GM12878 (cell line): ENCODE measurements at regions of chr9 and their contacts with region 1.

Region 1: DNA sequence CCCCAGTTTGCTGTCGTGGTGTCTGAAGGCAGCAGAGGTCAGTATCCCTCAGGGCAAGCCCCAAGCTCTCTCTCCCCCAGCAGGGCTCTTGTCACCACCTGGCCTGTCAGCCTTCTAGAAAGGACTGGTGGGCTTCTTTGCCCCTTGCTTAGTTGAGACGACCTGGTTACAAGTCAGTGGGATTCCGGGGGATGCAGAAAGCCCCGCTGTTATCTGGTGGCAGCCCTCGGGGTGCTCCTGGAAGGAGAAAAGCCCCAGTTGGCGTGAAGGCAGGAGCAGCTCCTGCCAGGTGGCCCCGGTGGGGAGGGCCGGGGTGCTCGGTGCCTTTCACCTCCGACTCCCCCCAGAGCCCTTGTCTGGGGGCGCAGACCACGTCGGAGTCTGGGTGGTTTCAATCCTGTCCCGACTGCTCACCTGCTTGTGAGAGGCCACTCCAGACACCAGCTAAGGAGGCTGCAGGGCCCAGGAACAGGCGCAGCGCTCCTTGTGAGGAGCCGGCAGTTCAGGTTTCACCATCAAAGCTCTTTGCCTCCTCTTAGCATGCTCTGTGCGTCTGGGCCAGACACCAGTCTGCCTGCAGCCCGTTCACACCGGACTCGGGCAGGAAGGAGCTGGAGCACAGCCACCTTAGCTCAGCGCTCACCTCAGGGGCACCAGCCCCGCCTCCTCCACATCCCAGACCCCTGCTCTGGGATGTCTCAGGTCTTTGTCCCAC is 106.5 kb upstream of the LMX1B start:
- DNase-seq: no peak
- ATAC-seq: no peak
- H3K4me3 ChIP-seq: no peak overlapping the region
- H3K27ac ChIP-seq: no peak overlapping the region
- H3K4me1 ChIP-seq: no peaks in the 10 kb centered on the region
- H3K27me3 ChIP-seq: peaks cover 0 to 1% of the 10 kb centered on the region in 2 experiments; a peak in 2 of 4 replicates
- CTCF ChIP-seq: no peak
- EP300 ChIP-seq: no peak
- POLR2A ChIP-seq: no peak
- RAD21 ChIP-seq: no peak

Region 2: GRCh38 chr9:126366366-126367011 is 140.7 kb before region 1 on chr9:
- CTCF ChIA-PET with region 1: no interaction called
- POLR2A ChIA-PET with region 1: no interaction called
- RAD21 ChIA-PET with region 1: no interaction called
- SMC1A ChIA-PET with region 1: no interaction called
- in situ Hi-C with region 1: no loop called
- intact Hi-C with region 1: no loop called
- DNase-seq: no peak
- ATAC-seq: no peak
- H3K4me3 ChIP-seq: no peak overlapping the region
- H3K27ac ChIP-seq: no peak overlapping the region
- H3K4me1 ChIP-seq: no peaks in the 10 kb centered on the region
- H3K27me3 ChIP-seq: no peaks in the 10 kb centered on the region; a peak in 1 of 4 replicates
- CTCF ChIP-seq: no peak
- EP300 ChIP-seq: no peak
- POLR2A ChIP-seq: no peak
- RAD21 ChIP-seq: no peak

Region 3: GRCh38 chr9:126471084-126471624 is 36.0 kb before region 1 on chr9:
- CTCF ChIA-PET with region 1: no interaction called
- POLR2A ChIA-PET with region 1: no interaction called
- RAD21 ChIA-PET with region 1: no interaction called
- SMC1A ChIA-PET with region 1: no interaction called
- in situ Hi-C with region 1: no loop called
- intact Hi-C with region 1: no loop called
- DNase-seq: peak; percentile 52
- ATAC-seq: peak; percentile 94
- H3K4me3 ChIP-seq: peak overlapping the region; percentile 2; the same call in 1 of the 2 replicates
- H3K27ac ChIP-seq: no peak overlapping the region
- H3K4me1 ChIP-seq: peaks cover 15% of the 10 kb centered on the region
- H3K27me3 ChIP-seq: peaks cover under 1 to 4% of the 10 kb centered on the region in 2 experiments; a peak in 3 of 4 replicates
- CTCF ChIP-seq: no peak
- EP300 ChIP-seq: 0 out of 4 replicates have a peak, but pooled peaks of 1 of the 2 experiments have one; percentile 14
- POLR2A ChIP-seq: no peak
- RAD21 ChIP-seq: no peak

Region 4: GRCh38 chr9:126558051-126558665 is 51.0 kb after region 1 on chr9:
- CTCF ChIA-PET with region 1: interaction called, 86 read pairs
- POLR2A ChIA-PET with region 1: no interaction called
- RAD21 ChIA-PET with region 1: interaction called, 4 read pairs
- SMC1A ChIA-PET with region 1: no interaction called
- in situ Hi-C with region 1: loop called (anchors 5 kb)
- intact Hi-C with region 1: no loop called
- DNase-seq: peak; percentile 27
- ATAC-seq: peak; percentile 88
- H3K4me3 ChIP-seq: no peak overlapping the region
- H3K27ac ChIP-seq: no peak overlapping the region
- H3K4me1 ChIP-seq: no peaks in the 10 kb centered on the region
- H3K27me3 ChIP-seq: no peaks in the 10 kb centered on the region; a peak in 1 of 4 replicates
- CTCF ChIP-seq: peak; percentile 93 to 99 (median 98)
- EP300 ChIP-seq: no peak
- POLR2A ChIP-seq: no peak
- RAD21 ChIP-seq: peak; percentile 98